A673 (cell line): ENCODE measurements at regions of chr3 and their contacts with region 1.

Region 1: GRCh38 chr3:139935016-139935865 is at the start of gene CLSTN2:
- DNase-seq: peak; percentile 82
- H3K4me3 ChIP-seq: peak within 1 kb of the TSS; percentile 64
- H3K27ac ChIP-seq: peak within 1 kb of the TSS; percentile 26
- H3K4me1 ChIP-seq: peaks cover 14% of the 10 kb centered on the region
- H3K27me3 ChIP-seq: peaks cover 26% of the 10 kb centered on the region
- CTCF ChIP-seq: no peak
- total RNA-seq, gene CLSTN2: 41.0 and 50.7 TPM in 2 replicates

Region 2: DNA sequence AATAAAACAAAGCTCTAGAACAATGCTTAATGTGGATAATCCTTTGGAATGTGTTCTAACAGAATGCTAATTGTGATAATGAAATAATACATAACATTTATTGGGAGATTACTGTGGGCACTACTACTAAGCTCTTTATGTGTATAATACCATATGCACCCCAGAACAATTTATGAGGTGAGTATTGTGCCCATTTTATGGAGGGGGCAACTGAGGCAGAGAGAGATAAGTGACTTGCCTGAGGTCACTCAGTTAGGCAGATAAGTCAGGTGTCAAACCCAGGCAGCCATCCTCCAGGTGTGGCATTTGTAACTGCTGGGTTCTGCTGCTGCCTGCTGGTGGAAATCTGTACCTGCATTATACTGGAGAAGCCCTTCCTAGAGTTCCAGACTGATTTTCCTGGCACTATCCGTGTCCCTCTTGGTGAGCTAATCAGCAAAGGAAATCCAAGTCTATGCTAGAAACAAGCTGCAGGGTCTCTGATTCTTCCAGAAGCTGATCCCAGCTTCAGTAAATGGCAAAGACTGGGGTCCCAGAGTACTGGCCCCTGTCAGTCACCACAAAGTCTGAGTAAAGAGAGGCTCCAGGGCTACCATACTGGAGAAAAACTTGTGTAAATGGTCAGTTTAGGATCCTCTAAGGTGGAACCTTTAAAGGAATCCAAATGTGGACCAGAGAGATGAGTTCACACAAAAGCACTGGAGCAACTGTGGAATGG is 373.1 kb before region 1 on chr3:
- CTCF ChIA-PET with region 1: no interaction called
- POLR2A ChIA-PET with region 1: no interaction called
- intact Hi-C with region 1: loop called (anchors 5 kb)
- DNase-seq: no peak
- H3K4me3 ChIP-seq: no peak overlapping the region
- H3K27ac ChIP-seq: no peak overlapping the region
- H3K4me1 ChIP-seq: no peaks in the 10 kb centered on the region
- H3K27me3 ChIP-seq: no peaks in the 10 kb centered on the region
- CTCF ChIP-seq: peak; percentile 77

Region 3: GRCh38 chr3:140051019-140051957 is 116.0 kb after region 1 on chr3:
- CTCF ChIA-PET with region 1: interaction called, 5 read pairs
- POLR2A ChIA-PET with region 1: no interaction called
- intact Hi-C with region 1: loop called (anchors 2 kb)
- DNase-seq: peak; percentile 48
- H3K4me3 ChIP-seq: no peak overlapping the region
- H3K27ac ChIP-seq: no peak overlapping the region
- H3K4me1 ChIP-seq: no peaks in the 10 kb centered on the region
- H3K27me3 ChIP-seq: no peaks in the 10 kb centered on the region
- CTCF ChIP-seq: peak; percentile 61

Region 4: DNA sequence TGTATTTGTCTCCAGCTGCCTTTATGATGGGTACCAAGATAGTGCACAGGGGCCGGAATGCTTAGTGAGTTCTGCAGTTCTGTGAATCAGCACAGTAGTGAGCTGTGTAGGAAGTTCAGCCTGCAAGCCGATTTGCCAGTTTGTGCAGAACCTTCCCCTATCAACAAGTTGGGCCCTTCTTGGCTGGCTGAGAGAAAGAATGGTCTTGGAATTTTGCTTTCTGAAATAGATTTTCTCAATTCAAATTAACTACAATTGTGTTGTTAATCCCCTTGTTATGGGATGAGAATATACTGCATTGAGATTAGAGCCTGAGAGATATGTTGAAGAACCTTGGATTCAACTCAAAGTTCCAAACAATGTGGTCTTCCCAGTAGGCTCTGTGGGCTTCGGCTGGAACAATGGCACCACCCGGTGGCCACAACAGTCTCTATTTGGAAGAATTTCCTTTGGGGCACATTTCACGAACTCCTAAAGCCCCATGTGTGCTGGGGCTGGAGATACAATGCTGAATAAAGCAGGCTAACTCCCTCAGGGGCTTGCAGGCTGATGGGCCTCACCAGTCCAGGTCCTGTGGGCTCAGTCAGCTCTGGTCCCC is 801.7 kb after region 1 on chr3:
- CTCF ChIA-PET with region 1: interaction called, 4 read pairs
- POLR2A ChIA-PET with region 1: no interaction called
- intact Hi-C with region 1: loop called (anchors 5 kb)
- DNase-seq: peak; percentile 76
- H3K4me3 ChIP-seq: no peak overlapping the region
- H3K27ac ChIP-seq: no peak overlapping the region
- H3K4me1 ChIP-seq: no peaks in the 10 kb centered on the region
- H3K27me3 ChIP-seq: no peaks in the 10 kb centered on the region
- CTCF ChIP-seq: peak; percentile 63

Region 5: DNA sequence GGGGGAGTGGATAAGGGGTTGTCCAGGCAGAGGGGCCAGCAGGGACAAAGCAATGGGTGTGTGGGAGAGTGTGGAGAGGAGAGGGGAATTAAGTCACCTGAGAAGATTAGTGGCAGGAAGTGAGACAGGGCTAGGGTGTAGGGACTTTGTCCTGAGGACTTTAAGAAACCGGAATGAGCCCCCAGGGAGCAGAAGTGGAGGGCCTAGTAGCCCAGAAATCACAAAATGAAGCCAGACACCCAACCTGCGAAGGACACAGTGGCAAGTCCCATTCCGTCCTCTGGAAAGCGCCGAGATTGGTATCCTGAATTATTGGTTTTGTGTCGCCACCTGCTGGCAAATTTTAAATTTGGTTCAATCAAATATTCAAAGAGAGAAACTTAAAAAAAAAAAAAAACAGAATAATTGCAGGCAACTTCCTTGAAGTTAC is 928.4 kb after region 1 on chr3:
- CTCF ChIA-PET with region 1: no interaction called
- POLR2A ChIA-PET with region 1: no interaction called
- intact Hi-C with region 1: loop called (anchors 2 kb)
- DNase-seq: peak; percentile 82
- H3K4me3 ChIP-seq: no peak overlapping the region
- H3K27ac ChIP-seq: no peak overlapping the region
- H3K4me1 ChIP-seq: no peaks in the 10 kb centered on the region
- H3K27me3 ChIP-seq: no peaks in the 10 kb centered on the region
- CTCF ChIP-seq: peak; percentile 67

Region 6: DNA sequence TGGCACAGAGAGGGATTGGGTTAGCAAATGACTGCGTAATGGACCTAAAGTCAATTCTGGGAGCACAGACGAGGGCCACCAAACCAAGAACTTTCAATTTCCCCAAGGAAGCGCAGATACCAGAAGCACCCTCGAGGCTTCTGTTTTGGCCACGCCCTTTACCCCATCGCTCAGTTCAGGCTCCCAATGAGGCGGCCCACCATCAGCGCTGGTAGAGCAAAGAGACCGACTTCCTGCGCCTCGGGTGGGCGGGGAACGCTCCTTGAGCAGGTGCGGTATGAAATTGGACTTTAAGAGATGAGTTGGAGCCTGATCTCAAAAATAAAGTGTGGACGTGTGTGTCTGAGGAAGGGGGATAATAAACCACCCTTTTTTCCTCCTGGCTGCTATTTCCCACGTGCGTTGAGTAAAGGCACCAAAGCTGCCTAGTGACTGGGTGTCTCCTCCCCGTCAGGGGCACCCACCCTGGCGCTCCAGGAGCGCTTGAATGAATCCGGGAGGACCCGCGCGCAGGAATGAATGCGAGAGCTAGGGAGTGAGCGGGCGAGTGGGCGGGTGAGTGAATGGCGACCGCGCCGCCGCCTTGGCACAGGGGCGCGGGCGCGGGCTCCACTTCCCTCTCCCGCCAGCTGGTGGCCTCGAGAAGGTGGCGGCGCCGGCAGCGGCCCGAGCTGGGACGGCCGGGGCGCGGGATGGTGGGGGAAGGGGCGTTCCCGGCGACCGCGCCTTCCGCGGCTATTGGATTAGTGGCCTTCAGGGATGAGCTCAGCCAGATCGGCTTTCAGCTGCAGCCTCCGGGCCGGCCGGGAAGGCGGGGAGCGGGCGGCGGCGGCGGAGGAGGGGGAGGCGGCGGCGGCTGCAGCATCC is 1115.6 kb after region 1 on chr3 and contains the start of gene SPSB4:
- CTCF ChIA-PET with region 1: no interaction called
- POLR2A ChIA-PET with region 1: no interaction called
- intact Hi-C with region 1: no loop called
- DNase-seq: peak; percentile 79
- H3K4me3 ChIP-seq: peak within 1 kb of the TSS; percentile 45
- H3K27ac ChIP-seq: no peak within 1 kb of the TSS
- H3K4me1 ChIP-seq: peaks cover 11% of the 10 kb centered on the region
- H3K27me3 ChIP-seq: peaks cover 72% of the 10 kb centered on the region
- CTCF ChIP-seq: peak; percentile 40
- total RNA-seq, gene SPSB4: 0.39 and 0.66 TPM in 2 replicates